Dorsolateral prefrontal cortex (tissue), 120 donors: ENCODE measurements at regions of chr5 and their contacts with region 1.

Region 1: DNA sequence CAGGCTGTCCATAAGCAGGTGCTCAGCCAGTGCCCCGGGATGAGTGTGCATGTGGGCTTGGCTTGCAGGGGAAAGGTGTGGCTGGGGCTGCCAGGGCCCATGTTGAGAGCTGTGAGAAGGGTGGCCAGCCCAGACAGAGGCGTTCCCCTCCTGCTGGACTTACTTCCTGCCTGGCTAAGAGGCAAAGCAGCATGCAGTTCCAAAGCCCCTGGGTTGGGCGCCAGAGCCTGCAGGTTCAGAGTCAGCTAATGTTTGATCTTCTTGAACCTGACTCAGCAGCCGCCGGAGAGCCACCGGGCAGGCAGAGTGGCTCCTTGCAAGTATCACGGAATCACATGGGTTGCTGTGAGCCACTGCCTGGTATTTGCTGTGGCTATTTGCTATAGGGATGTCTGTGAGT is 168.4 kb upstream of the MAP1B start:
- DNase-seq: peak in 1 of 10 donors; percentile 62
- H3K4me3 ChIP-seq: peak overlapping the region in 3 of 59 donors; percentile 5 to 35 (median 15)
- H3K27ac ChIP-seq: peak overlapping the region; percentile 30 to 90 (median 78)
- H3K27me3 ChIP-seq: no peaks in the 10 kb centered on the region
- CTCF ChIP-seq: no peak

Region 2: DNA sequence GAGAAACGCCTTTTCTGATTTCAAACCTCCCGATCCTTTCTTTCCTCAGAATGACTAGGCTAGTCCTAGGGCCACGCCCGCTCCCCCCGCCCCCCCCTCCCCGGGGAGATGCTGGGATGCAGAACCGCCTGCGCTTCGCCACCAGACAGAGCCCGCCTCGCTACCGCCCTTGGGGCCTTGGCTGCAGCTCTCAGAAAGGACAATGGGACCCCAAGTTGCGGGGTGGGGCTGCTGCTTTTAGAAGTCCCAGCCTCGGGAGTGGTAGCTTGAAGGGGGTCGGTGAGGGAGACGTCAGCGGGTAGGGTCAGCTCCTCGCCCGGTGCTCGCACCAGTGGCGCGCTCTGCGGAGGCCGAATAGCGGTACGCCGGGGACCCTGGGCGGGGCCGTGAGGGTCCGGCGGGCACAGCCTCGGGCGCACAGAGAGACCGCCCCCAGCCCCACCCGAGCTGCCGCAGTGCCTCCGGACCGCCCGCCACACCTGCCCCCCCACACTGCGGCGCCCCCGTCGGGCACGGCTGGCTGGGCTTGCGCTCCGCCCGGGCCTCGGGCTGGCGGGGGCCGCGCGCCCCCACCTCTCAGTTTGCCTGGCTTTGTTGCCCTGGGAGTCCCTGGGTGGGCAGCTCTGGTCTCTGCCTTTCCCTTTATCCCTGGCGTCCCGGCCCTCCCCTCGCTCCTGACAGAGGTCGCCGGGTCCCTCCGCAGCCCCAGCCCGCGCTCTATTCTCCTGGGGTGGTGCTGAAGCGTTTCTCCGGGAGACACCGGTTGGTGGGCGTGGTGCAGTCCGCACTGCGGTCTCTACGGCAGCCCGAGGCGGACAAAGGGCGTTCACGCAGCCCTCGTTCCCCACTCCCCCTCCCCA is 169.5 kb after region 1 on chr5:
- intact Hi-C with region 1: loop called (anchors 5 kb)
- DNase-seq: peak; percentile 67 to 86 (median 78)
- H3K4me3 ChIP-seq: peak overlapping the region; percentile 68 to 97 (median 86)
- H3K27ac ChIP-seq: peak overlapping the region; percentile 46 to 98 (median 92)
- H3K27me3 ChIP-seq: no peaks in the 10 kb centered on the region
- CTCF ChIP-seq: peak in 8 of 56 donors; percentile 9 to 29 (median 15)

Region 3: GRCh38 chr5:72268753-72269410 is 330.0 kb after region 1 on chr5:
- intact Hi-C with region 1: no loop called
- DNase-seq: peak in 4 of 10 donors; percentile 20 to 50 (median 37)
- H3K4me3 ChIP-seq: no peak overlapping the region
- H3K27ac ChIP-seq: peak overlapping the region in 10 of 59 donors; percentile 3 to 61 (median 18)
- H3K27me3 ChIP-seq: no peaks in the 10 kb centered on the region
- CTCF ChIP-seq: peak in 55 of 56 donors; percentile 22 to 73 (median 56)